Prostate gland (tissue), 2 donors: ENCODE measurements at regions of chrX and their contacts with region 1.

Region 1: GRCh38 chrX:132968296-132968949 is 10.0 kb upstream of the HS6ST2 start:
- DNase-seq: no peak
- H3K4me3 ChIP-seq: no peak overlapping the region
- H3K27ac ChIP-seq: no peak overlapping the region
- H3K4me1 ChIP-seq: no peaks in the 10 kb centered on the region
- H3K27me3 ChIP-seq: no peaks in the 10 kb centered on the region
- CTCF ChIP-seq: no peak
- POLR2A ChIP-seq: no peak

Region 2: GRCh38 chrX:132497432-132497831 is 471.0 kb before region 1 on chrX:
- intact Hi-C with region 1: no loop called
- DNase-seq: no peak
- H3K4me3 ChIP-seq: no peak overlapping the region
- H3K27ac ChIP-seq: no peak overlapping the region
- H3K4me1 ChIP-seq: no peaks in the 10 kb centered on the region
- H3K27me3 ChIP-seq: no peaks in the 10 kb centered on the region
- CTCF ChIP-seq: no peak
- POLR2A ChIP-seq: no peak

Region 3: DNA sequence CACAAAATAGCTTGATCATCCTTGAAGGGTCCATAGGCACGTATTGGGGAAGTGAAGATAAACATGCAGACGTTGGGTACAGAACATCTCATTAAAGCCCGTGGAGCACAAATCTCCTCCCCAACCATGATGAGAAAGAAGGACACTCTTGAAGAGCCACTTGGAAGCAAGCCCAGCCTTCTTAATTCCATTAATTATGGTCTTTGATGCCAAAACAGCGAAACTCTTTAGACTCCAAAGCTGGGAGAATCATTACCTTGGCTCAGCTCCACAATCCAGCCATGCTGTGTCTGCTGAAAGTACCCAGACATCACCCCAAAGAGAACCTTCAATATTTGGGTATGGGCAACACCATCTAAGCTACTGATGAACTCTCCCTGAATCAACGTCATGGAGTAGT is 310.5 kb before region 1 on chrX:
- intact Hi-C with region 1: no loop called
- DNase-seq: no peak
- H3K4me3 ChIP-seq: no peak overlapping the region
- H3K27ac ChIP-seq: no peak overlapping the region
- H3K4me1 ChIP-seq: no peaks in the 10 kb centered on the region
- H3K27me3 ChIP-seq: no peaks in the 10 kb centered on the region
- CTCF ChIP-seq: no peak
- POLR2A ChIP-seq: no peak

Region 4: GRCh38 chrX:133660281-133660680 is 691.9 kb after region 1 on chrX:
- intact Hi-C with region 1: loop called (anchors 10 kb)
- DNase-seq: no peak
- H3K4me3 ChIP-seq: no peak overlapping the region
- H3K27ac ChIP-seq: no peak overlapping the region
- H3K4me1 ChIP-seq: no peaks in the 10 kb centered on the region
- H3K27me3 ChIP-seq: no peaks in the 10 kb centered on the region
- CTCF ChIP-seq: no peak
- POLR2A ChIP-seq: no peak